ENCODE measurements at regions of chr19 and their contacts with region 1.

Region 1: DNA sequence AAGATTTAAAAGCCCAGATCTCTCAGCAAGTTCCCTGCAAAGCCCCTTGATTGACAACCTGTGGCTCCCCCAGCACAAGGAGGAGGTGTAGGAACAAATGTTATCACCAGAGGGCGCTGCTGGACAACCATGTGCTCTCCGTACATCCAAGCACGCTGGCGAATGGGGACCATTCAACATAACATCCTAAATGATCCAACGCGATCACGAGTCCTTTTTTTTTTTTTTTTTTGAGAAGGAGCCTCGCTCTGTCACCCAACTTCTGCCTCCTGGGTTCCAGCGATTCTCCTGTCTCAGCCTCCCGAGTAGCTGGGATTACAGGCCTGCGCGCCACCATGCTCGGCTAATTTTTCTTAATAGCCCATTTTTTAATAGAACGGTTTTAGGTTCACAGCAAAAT is 52.0 kb downstream of the NWD1 start:
- DNase-seq: peak; percentile 41 to 88 (median 68)
- ATAC-seq: peak; percentile 61
- H3K4me3 ChIP-seq: no peak overlapping the region
- H3K4me3 Mint-ChIP-seq: no peak overlapping the region
- H3K27ac ChIP-seq: no peak overlapping the region
- H3K27ac Mint-ChIP-seq: no peak overlapping the region
- H3K4me1 ChIP-seq: no peaks in the 10 kb centered on the region
- H3K4me1 Mint-ChIP-seq: no peaks in the 10 kb centered on the region
- H3K27me3 ChIP-seq: peaks cover 5 to 7% of the 10 kb centered on the region in 2 experiments
- H3K27me3 Mint-ChIP-seq: peaks cover 57% of the 10 kb centered on the region
- CTCF ChIP-seq: peak; percentile 79

Region 2: DNA sequence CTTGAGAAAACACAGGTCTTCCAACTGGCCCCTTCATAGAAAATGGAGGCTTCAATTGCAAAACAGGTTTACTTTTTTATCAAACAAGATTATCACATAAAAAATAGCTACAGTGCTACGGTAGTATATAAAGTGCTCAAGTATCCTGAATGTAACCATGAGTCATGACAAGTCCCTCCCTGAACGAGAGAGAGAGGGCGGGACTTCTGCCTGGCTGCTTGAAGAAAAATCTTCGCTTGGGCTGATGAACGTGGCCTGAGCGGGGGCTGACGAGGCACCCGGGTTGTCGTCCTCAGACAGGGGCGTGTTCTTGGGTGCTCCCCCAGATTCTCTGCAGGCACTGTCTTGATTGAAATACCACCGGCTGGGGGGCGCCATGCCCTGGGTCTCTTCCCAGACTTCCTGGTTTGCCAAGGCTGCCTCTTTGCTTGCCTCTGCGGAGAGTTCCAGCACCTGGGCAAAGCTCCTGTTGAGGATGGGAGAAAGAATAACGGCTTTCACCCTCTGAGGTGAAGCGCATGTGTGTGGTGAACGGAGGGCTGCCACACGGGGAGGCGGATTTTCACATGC is 278.2 kb after region 1 on chr19:
- CTCF ChIA-PET with region 1: interaction called, 7 read pairs
- POLR2A ChIA-PET with region 1: no interaction called
- intact Hi-C with region 1: loop called in 1 of 2 experiments (anchors 5 kb)
- DNase-seq: no peak
- ATAC-seq: no peak
- H3K4me3 ChIP-seq: no peak overlapping the region
- H3K4me3 Mint-ChIP-seq: no peak overlapping the region
- H3K27ac ChIP-seq: no peak overlapping the region
- H3K27ac Mint-ChIP-seq: no peak overlapping the region
- H3K4me1 ChIP-seq: no peaks in the 10 kb centered on the region
- H3K4me1 Mint-ChIP-seq: no peaks in the 10 kb centered on the region
- H3K27me3 ChIP-seq: no peaks in the 10 kb centered on the region
- H3K27me3 Mint-ChIP-seq: no peaks in the 10 kb centered on the region
- CTCF ChIP-seq: no peak

Measured in CD4-positive, alpha-beta T cell (primary cell).